ENCODE measurements at regions of chr20 and their contacts with region 1.

Region 1: DNA sequence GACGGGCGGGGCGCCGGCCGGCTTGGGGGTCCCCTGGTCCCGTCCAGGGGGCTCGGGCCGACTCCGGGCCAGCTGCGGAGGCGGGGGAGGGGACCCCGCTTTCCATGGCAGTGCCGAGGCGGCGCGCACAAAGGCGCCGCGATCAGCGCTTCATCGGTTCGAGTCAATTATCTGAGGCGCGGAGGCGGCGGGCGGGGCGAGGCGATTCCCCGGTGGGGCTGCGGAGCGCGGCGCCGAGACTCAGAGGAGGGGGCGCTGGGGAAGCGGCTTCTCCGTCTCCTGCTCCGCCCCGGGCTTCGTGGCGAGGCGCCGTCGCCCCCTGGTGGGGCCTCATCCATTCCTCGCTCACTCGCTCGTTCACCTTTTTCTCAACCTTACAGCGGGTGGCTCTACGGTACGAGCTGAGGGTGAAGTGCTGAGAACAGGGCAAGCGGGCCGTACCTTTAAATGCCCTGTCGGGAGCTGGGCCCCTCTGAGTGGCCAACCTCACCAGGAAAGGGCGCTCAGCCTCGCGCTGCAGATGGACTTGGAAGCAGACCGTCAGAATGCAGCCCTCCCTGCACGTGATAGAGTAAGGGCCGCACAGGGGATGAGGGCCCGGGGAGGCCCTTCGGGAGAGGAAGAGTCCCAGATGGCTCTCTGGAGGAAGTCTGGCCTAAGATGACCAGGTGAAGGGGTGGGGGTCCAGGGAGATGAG is 39.9 kb downstream of the SLC52A3 start:
- DNase-seq: peak; percentile 50 to 66
- ATAC-seq: peak; percentile 75 to 88 (median 84)
- H3K4me3 ChIP-seq: peak overlapping the region; percentile 38 to 70 (median 58)
- H3K27ac ChIP-seq: peak overlapping the region in 1 of 10 donors; percentile 36
- H3K4me1 ChIP-seq: peaks cover 0 to 16% (median 8%) of the 10 kb centered on the region in 9 donors
- H3K27me3 ChIP-seq: peaks cover 0 to 63% (median 35%) of the 10 kb centered on the region in 7 donors
- CTCF ChIP-seq: peak; percentile 43 to 78 (median 71)

Region 2: DNA sequence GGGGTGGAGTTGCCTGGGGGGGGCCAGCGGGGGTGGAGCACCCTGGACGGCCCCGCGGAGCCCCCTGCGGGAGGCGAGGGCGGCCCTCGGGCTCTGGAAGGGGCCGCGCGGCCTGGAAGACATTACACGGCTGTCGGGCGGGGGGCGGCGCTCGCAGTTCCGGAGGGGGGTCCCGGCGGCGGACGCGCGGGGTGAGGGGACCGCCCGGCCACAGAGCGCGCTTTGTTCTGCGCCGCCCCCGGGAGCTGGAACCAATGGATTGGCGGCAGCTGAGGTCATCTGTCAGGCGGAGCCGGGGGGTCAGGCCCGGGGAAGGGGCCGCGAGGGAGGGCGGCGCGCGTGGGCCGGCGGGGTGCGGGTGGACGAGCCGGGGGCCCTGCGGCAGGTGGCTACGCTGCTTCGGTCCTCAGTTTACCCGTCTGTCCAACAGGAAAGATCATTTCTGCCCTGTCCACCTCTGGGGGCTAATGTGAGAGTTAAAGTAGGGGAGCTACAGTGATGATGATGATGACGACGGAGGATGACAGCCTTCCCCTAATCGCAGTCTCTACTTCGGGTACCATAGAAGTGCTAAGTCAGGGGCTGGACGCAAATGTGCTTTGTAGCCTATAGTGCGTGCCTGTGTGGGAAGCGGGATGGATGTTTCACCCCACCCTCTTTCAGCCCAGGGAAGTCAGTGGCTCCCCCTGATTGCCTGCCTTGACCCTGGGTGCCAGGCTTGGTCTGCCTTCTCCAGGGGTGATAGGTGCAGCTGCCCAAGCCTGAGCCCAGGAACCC is 85.8 kb before region 1 on chr20:
- intact Hi-C with region 1: no loop called
- DNase-seq: peak; percentile 62
- ATAC-seq: peak; percentile 41 to 74 (median 55)
- H3K4me3 ChIP-seq: peak overlapping the region; percentile 28 to 66 (median 54)
- H3K27ac ChIP-seq: peak overlapping the region; percentile 29 to 88 (median 74)
- H3K4me1 ChIP-seq: peaks cover 2 to 34% (median 24%) of the 10 kb centered on the region in 9 donors
- H3K27me3 ChIP-seq: peaks cover 0 to 14% (median 0%) of the 10 kb centered on the region in 7 donors
- CTCF ChIP-seq: no peak

Region 3: GRCh38 chr20:653110-653589 is 75.2 kb before region 1 on chr20 and contains the start of gene SRXN1:
- intact Hi-C with region 1: loop called in 6 of 10 experiments (anchors 1 to 5 kb)
- DNase-seq: peak; percentile 91 to 93
- ATAC-seq: peak; percentile 92 to 96 (median 96)
- H3K4me3 ChIP-seq: peak within 1 kb of the TSS; percentile 36 to 87 (median 76)
- H3K27ac ChIP-seq: peak within 1 kb of the TSS; percentile 86 to 98 (median 93)
- H3K4me1 ChIP-seq: peaks cover 6 to 48% (median 22%) of the 10 kb centered on the region in 9 donors
- H3K27me3 ChIP-seq: no peaks in the 10 kb centered on the region
- CTCF ChIP-seq: peak; percentile 39 to 79 (median 70)
- total RNA-seq, gene SRXN1: 21.4 to 42.0 (median 30.9) TPM

Region 4: DNA sequence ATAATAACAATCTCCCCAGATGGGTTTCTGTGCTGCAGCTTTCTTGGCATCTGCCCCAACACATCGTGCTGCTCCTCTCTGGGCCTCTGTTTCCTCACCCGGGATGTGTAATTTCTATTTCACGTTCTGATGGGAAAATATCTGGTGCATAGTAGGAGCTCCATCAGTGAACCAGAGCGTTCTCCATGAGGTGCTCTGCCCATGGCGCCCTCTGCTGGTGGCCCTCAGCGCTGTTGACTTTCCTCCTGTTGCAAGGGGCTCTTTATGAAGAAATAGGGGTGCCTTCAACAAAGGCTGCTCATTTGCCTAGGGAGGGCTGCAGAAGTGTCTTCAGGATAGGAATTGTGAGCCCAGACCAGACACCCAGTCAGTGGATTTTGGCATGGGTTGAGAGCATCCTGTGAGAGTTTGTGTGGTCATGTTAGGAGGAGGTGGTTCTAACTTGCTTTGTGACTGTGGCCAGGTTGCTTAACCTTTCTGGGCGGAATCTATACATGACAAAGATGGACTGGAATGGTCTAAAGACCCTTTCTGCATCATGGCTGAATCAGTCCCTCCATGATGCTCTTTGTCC is 60.9 kb before region 1 on chr20:
- intact Hi-C with region 1: loop called in 6 of 10 experiments (anchors 5 to 10 kb)
- DNase-seq: peak; percentile 67 to 75
- ATAC-seq: peak in 4 of 8 donors; percentile 3 to 65 (median 50)
- H3K4me3 ChIP-seq: no peak overlapping the region
- H3K27ac ChIP-seq: peak overlapping the region in 8 of 10 donors; percentile 31 to 79 (median 46)
- H3K4me1 ChIP-seq: peaks cover 5 to 45% (median 16%) of the 10 kb centered on the region in 9 donors
- H3K27me3 ChIP-seq: peaks cover 16 to 70% (median 49%) of the 10 kb centered on the region in 7 donors
- CTCF ChIP-seq: peak; percentile 52 to 95 (median 80)

Region 5: DNA sequence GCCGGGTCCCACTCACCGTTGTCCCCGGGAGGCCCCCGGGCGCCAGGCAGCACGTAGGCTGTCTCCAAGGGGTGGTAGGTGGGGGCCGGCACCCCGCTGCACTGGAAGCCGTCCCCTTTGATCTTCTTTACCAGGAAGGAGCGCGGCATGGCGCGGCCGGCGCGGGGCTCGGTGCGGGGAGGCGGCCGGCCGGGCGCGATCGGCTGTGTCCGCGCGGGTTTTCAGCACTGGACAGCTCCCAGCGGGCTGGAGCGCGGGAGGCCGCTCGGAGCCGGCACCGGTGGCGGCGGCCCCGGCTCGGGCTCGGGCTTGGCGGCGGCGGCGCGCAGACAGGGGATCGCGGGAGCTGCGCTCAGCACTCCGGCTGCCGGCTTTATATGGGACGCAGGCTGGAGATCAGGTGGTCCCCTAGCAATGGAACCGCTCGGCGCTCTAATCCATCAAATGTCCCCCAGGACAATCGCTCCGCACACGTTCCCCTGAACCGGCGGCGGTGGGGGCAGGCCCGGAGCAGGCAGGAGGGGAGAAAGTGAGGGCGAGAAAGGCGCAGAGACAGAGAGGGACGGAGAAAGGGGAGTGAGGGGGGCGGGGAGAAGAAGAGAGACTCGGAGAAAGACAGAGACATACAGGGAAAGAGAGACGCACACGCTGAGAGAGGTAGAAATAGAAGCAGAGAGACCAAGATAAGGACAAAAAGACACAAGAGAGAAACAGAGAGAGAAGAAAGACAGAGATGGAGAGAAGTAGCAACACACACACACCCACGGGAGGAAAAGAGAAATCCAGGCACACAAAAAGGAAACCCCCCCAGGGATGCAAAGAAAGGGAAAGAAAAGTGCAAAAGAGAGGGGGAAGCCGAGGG is 52.7 kb before region 1 on chr20 and contains the start of gene SCRT2:
- intact Hi-C with region 1: loop called in 1 of 10 experiments (anchors 10 kb)
- DNase-seq: peak; percentile 83 to 89
- ATAC-seq: peak; percentile 89 to 97 (median 92)
- H3K4me3 ChIP-seq: peak within 1 kb of the TSS in 7 of 10 donors; percentile 2 to 45 (median 36)
- H3K27ac ChIP-seq: no peak within 1 kb of the TSS
- H3K4me1 ChIP-seq: peaks cover 2 to 24% (median 20%) of the 10 kb centered on the region in 9 donors
- H3K27me3 ChIP-seq: peaks cover 0 to 76% (median 73%) of the 10 kb centered on the region in 7 donors
- CTCF ChIP-seq: no peak
- total RNA-seq, gene SCRT2: not detected